ENCODE measurements at regions of chr19 and their contacts with region 1.

Region 1: GRCh38 chr19:17305517-17306284 is at the start of gene MRPL34:
- DNase-seq: peak; percentile 96
- ATAC-seq: peak; percentile 84
- H3K4me3 ChIP-seq: peak within 1 kb of the TSS; percentile 60 to 77
- H3K27ac ChIP-seq: peak within 1 kb of the TSS; percentile 92
- H3K4me1 ChIP-seq: peaks cover 34% of the 10 kb centered on the region
- H3K27me3 ChIP-seq: no peaks in the 10 kb centered on the region
- CTCF ChIP-seq: peak; percentile 85
- total RNA-seq, gene MRPL34: 87.7 TPM

Region 2: DNA sequence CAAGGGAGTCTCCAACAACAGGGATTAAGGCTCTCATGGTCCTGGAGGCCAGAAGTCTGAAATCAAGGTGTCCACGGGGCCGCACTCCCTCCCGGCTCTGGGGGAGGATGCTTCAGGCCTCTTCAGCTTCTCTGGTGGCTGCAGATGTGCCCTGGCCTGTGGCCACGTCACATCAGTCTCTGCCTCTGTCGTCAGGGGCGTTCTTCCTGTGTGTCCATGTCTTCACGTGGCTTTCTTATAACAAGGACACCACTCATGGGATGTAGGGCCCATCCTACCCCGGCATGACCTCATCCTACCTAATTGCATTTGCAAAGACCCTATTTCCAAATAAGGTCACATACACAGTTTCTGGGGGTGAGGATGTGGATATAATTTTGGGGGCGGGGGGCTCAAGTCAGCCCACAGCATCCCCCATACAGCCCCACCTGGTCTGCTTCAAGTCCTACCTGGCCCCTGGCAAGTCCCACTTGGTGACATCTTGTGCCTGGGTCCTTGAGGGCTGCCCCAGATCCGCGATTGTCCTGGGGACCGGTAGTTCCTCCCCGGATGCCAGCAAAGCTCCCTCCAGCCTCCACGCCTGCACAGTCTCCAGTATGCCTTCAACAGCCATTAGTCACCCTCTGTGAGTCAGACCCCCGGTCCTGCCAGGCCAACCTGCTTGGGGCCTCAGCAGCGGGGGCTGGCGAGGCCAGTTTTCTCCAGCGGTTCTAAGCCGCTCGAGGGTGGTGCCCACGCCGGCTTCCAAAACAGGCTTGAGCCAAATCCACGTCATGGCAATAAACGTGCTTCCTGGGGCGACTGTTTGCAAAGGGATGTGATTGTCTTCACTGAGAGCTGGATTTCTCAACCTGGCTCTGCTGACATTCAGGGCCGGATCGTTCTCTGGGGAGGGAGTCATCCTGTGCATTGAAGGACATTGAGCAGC is 197.9 kb before region 1 on chr19:
- CTCF ChIA-PET with region 1: no interaction called
- POLR2A ChIA-PET with region 1: no interaction called
- in situ Hi-C with region 1: no loop called
- intact Hi-C with region 1: no loop called
- DNase-seq: peak; percentile 81
- ATAC-seq: peak; percentile 97
- H3K4me3 ChIP-seq: peak overlapping the region in 1 of 2 experiments; percentile 26; a peak in 2 of 4 replicates
- H3K27ac ChIP-seq: peak overlapping the region; percentile 79
- H3K4me1 ChIP-seq: peaks cover 17% of the 10 kb centered on the region
- H3K27me3 ChIP-seq: no peaks in the 10 kb centered on the region
- CTCF ChIP-seq: no peak

Region 3: DNA sequence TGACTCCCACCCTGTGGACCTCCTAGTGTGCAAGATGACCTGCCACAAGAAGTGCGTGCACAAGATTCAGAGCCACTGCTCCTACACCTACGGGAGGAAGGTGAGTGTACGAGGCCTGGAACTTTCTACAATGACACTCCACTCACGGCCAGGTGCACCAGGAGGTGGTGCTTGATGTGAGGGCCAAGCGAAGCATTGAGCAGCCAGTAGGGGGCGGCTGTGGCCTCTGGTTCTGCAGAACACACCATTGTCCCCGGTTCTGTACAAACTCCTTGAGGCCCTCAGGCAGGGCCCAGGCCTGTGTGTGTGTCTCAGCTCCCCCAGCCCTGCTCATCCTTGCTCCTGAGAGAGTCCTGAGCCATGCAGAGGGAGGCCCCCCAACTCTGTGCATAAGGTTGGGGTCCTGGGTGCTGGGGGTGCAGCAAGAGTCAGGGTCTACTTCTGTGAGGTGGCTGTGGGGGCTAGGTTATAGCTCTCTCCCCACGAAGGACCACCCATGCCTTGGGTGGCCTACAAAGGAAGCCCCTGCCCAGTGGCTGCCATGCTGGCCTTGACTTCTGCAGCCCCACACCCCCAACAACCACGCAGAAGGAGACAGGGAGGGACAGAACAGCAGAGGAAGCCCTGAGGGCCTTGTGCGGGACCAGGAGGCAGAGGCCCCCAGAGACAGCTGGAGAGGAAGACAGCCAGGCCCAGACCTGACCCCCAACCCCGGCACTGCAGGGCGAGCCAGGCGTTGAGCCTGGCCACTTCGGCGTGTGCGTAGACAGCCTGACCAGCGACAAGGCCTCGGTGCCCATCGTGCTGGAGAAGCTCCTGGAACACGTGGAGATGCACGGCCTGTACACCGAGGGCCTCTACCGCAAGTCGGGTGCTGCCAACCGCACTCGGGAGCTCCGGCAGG is 100.2 kb before region 1 on chr19:
- CTCF ChIA-PET with region 1: no interaction called
- POLR2A ChIA-PET with region 1: interaction called, 10 read pairs
- in situ Hi-C with region 1: no loop called
- intact Hi-C with region 1: no loop called
- DNase-seq: no peak
- ATAC-seq: peak; percentile 55
- H3K4me3 ChIP-seq: no peak overlapping the region
- H3K27ac ChIP-seq: no peak overlapping the region
- H3K4me1 ChIP-seq: no peaks in the 10 kb centered on the region
- H3K27me3 ChIP-seq: no peaks in the 10 kb centered on the region
- CTCF ChIP-seq: peak; percentile 77

Region 4: DNA sequence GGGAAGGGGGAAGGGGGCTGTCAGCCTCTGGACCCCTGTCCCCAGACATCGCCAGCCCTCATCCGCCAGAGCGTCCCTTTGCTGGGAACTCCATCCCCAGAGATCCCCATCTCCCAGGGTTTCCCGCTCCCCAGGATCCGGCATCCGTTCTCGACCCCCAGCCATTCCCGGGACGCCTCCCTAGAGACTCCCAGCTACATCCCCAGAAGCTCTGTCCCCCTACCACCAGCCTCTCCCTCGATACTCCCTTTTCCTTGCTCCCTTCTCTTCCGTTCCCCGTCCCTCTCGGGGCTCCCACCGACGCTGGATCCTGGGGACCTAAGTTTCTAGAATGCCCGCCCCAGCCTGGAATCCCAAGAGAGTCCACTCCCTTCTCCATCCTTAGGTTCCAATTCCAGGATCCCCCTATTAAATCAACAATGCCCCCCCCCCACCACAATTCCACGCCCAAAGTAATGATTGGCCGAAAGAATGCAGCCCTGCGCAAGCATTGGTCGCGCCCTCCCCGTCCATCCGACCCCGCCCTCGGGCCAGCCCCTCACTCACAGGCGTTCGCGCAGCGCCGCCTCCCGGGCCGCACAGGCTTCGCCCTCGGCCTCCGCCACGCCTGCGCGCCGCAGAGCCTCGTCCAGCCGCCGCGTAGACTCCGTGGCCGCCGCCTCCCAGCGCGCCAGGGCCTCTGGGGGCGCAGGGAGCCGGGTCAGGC is 85.1 kb after region 1 on chr19:
- CTCF ChIA-PET with region 1: no interaction called
- POLR2A ChIA-PET with region 1: no interaction called
- in situ Hi-C with region 1: no loop called
- intact Hi-C with region 1: no loop called
- DNase-seq: no peak
- ATAC-seq: peak; percentile 99
- H3K4me3 ChIP-seq: peak overlapping the region; percentile 63 to 75
- H3K27ac ChIP-seq: no peak overlapping the region
- H3K4me1 ChIP-seq: peaks cover 5% of the 10 kb centered on the region
- H3K27me3 ChIP-seq: no peaks in the 10 kb centered on the region
- CTCF ChIP-seq: peak; percentile 86

Region 5: DNA sequence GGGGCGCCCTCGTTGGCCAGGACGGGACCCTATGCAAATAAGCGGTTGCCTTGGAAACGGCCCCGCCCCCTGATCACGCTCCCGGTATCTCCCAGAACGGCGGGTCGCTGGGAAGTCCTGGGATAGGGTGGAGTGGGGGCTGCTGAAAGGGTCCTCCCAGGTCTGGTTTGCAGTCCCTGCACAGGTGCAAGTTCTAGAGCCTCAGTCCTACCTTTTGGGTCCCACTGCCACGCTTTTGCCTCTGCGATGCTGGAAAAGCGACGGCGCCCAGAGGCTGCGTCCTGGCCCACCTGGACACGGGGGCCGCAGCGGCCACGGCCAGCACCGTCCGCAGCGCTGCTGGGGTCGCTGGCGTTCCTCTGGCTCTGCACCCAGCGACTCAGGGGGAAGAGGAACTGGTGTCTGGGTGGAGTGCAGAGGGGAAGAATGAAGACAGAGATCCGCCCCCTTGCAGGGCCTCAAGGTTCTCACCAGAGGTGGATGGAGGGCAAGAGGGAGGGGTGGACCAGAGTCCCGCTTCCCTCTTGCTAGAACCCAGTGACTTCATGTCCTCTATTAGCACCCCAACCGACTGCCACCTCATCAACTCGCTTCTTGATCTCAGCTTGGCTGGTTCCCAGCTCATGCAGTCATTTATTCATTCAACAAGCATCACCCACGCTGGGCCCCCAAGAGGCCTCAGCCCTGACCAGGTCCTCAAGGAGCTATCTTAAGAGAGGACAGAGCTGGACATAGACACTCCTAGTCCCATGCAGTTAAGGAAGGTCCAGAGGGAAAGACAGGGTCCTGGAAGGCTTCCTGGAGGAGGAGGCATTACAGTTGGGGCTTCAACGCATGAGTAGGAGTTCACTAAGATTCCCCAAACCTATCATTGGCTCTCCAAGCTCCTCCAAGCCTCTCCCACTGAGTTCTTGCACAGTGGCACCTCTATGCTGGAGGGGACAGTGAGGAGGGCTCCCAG is 1091.8 kb after region 1 on chr19 and contains the start of gene LRRC25:
- CTCF ChIA-PET with region 1: no interaction called
- POLR2A ChIA-PET with region 1: no interaction called
- in situ Hi-C with region 1: no loop called
- intact Hi-C with region 1: loop called (anchors 10 kb)
- DNase-seq: no peak
- ATAC-seq: no peak
- H3K4me3 ChIP-seq: no peak within 1 kb of the TSS
- H3K27ac ChIP-seq: no peak within 1 kb of the TSS
- H3K4me1 ChIP-seq: peaks cover 6% of the 10 kb centered on the region
- H3K27me3 ChIP-seq: no peaks in the 10 kb centered on the region
- CTCF ChIP-seq: no peak
- total RNA-seq, gene LRRC25: 0.15 TPM

Measured in Panc1 (cell line).